Calu3 (cell line): ENCODE measurements at regions of chr17 and their contacts with region 1.

Region 1: DNA sequence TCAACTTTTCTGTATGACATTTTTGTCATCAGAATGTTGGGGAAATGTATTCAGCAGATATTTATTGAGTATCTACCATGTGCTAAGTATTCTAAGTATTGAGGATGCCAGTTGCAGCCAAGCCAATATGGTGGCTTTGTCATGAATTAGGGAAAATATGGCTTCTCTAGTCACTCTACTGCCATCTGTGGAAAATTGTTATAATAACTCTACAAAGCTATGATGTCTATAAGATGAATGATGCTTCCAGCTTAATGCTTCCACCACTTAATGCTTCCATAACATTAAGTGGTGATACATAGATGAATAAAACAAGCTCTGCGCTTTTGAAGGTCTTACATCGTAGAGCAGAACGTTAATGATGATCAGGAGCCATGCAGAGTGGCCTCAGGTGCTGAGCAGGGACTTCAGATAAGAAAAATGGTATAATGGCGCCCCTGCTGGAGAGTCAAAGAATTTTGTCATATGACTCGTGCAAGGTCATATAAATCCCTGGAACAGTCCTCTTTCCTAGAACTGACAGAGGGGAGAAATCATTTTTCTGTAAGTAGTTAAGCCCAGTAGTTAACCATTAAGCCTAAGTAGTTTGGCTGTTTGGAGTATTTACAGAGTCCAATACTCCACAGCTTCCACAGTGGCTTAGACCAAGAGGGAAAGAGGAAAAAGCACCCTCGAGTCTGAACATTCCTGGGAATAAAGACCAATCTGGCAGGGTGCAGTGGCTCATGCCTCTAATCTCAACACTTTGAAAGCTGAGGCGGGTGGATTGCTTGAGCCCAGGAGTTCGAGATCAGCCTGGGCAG is 2.7 kb upstream of the TMIGD1 start:
- DNase-seq: peak; percentile 63
- H3K4me3 Mint-ChIP-seq: no peak overlapping the region
- H3K27ac Mint-ChIP-seq: no peak overlapping the region
- H3K4me1 Mint-ChIP-seq: peaks cover 16% of the 10 kb centered on the region
- H3K27me3 Mint-ChIP-seq: no peaks in the 10 kb centered on the region
- CTCF ChIP-seq: peak; percentile 71

Region 2: GRCh38 chr17:30299000-30299399 is 37.6 kb before region 1 on chr17:
- CTCF ChIA-PET with region 1: interaction called, 7 read pairs
- intact Hi-C with region 1: loop called (anchors 5 kb)
- DNase-seq: no peak
- H3K4me3 Mint-ChIP-seq: no peak overlapping the region
- H3K27ac Mint-ChIP-seq: no peak overlapping the region
- H3K4me1 Mint-ChIP-seq: no peaks in the 10 kb centered on the region
- H3K27me3 Mint-ChIP-seq: no peaks in the 10 kb centered on the region
- CTCF ChIP-seq: peak; percentile 18